Pancreas (tissue), 10 donors: ENCODE measurements at regions of chr19 and their contacts with region 1.

Region 1: GRCh38 chr19:15871570-15871969 is 26.3 kb downstream of the CYP4F2 start:
- DNase-seq: peak in 1 of 6 donors; percentile 21
- ATAC-seq: peak in 1 of 4 donors; percentile 46
- H3K4me3 ChIP-seq: no peak overlapping the region
- H3K27ac ChIP-seq: no peak overlapping the region
- H3K4me1 ChIP-seq: peaks cover 0 to 4% (median 0%) of the 10 kb centered on the region in 3 donors
- H3K27me3 ChIP-seq: no peaks in the 10 kb centered on the region
- CTCF ChIP-seq: no peak

Region 2: GRCh38 chr19:15629003-15629880 is 242.3 kb before region 1 on chr19:
- intact Hi-C with region 1: loop called in 1 of 3 experiments (anchors 10 kb)
- DNase-seq: peak; percentile 63 to 99 (median 88)
- ATAC-seq: peak; percentile 96 to 100 (median 100)
- H3K4me3 ChIP-seq: no peak overlapping the region
- H3K27ac ChIP-seq: no peak overlapping the region
- H3K4me1 ChIP-seq: no peaks in the 10 kb centered on the region
- H3K27me3 ChIP-seq: peaks cover 0 to 8% (median 4%) of the 10 kb centered on the region in 4 donors
- CTCF ChIP-seq: peak; percentile 89 to 97 (median 96)